Posterior cingulate gyrus (tissue), 11 donors: ENCODE measurements at regions of chr10 and their contacts with region 1.

Region 1: GRCh38 chr10:76036111-76036940 is 604.9 kb downstream of the LRMDA start:
- DNase-seq: peak; percentile 54 to 96 (median 78)

Region 2: GRCh38 chr10:75401569-75402485 is 634.5 kb before region 1 on chr10 and contains the start of gene ZNF503:
- intact Hi-C with region 1: loop called (anchors 2 kb)
- DNase-seq: peak; percentile 84 to 99 (median 96)

Region 3: DNA sequence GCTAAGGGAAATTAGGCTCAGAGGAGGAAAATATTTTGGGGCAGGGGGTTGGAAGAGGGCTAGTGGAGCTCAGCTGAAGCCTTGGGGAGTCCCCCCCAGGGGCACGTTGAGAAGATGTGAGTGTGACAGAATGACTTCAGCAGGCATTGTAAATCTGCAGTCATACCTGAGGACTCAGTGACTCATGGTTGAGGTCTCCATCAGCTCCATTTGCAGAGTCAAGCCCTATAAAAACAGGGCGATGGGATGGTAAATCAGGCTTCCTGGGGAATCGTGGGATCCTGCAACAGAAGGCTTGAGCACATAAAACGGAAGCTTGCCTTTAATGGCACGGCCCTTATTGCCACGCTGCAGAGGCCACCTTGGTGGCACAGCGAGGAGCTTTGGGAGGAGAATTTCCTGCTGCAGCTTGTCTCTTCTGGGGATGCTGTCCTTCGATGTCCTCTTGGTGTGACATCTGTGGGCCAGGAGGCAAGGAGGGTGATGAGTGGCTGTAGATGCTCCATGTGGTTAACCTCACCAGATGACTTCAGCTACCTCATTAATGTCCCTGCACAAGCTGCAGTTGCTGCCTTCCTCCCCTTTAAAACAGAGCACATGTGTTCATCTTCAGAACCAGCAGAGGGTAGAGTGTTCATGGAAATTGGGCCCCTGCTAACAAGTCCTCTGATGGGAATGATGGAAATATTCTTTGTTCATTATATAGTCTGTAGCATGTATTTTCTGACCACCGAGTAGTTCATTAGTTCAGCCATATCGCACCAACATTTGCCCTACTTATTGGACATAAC is 319.0 kb before region 1 on chr10:
- intact Hi-C with region 1: loop called (anchors 10 kb)
- DNase-seq: no peak

Region 4: GRCh38 chr10:75922435-75922834 is 113.9 kb before region 1 on chr10:
- intact Hi-C with region 1: no loop called
- DNase-seq: no peak

Region 5: GRCh38 chr10:76984559-76985443 is 948.5 kb after region 1 on chr10:
- intact Hi-C with region 1: loop called (anchors 5 kb)
- DNase-seq: peak; percentile 53 to 96 (median 74)